Activated CD8-positive, alpha-beta T cell treated with anti-CD3 and anti-CD28 coated beads, Interleukin-2, amount 10 ng/mL, durations not matched to agents 7 days and 5 days (primary cell): ENCODE measurements at regions of chr3 and their contacts with region 1.

Region 1: DNA sequence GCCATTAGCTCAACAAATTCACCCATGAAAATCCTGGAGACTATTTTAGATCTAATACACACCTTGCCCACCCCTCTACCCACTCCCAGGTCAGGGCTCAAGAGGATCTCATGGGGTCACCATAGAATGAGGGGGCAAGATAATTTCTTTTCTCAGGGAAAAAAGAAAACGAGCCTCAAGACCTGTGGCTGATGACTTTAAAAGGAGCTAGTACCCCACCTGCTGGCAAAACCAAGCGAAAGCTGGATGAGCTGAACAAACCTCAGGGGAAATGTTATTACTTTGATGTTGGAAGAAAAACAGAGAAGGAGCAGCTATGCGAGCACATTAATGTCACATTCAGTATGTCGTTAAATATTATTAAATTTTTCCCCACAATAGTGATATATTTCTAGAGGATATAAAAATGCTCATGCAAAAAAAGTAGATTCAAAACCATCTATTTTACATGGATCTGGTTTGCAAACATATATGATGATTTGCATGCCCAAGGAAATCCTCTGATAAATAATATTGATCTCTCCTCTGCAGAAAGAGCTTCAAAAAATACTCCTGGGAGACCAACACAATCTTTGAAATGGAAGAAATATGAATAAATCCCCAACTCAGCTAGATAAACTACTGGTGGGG is 37.7 kb downstream of the PLD1 start:
- DNase-seq: peak; percentile 57
- ATAC-seq: no peak
- H3K4me3 Mint-ChIP-seq: no peak overlapping the region
- H3K27ac Mint-ChIP-seq: no peak overlapping the region
- H3K4me1 Mint-ChIP-seq: no peaks in the 10 kb centered on the region
- H3K27me3 Mint-ChIP-seq: peaks cover 20% of the 10 kb centered on the region

Region 2: GRCh38 chr3:170961616-170962400 is 810.7 kb before region 1 on chr3:
- CTCF ChIA-PET with region 1: interaction called, 61 read pairs
- POLR2A ChIA-PET with region 1: no interaction called
- DNase-seq: peak; percentile 26
- ATAC-seq: no peak
- H3K4me3 Mint-ChIP-seq: no peak overlapping the region
- H3K27ac Mint-ChIP-seq: no peak overlapping the region
- H3K4me1 Mint-ChIP-seq: no peaks in the 10 kb centered on the region
- H3K27me3 Mint-ChIP-seq: peaks cover 14% of the 10 kb centered on the region

Region 3: DNA sequence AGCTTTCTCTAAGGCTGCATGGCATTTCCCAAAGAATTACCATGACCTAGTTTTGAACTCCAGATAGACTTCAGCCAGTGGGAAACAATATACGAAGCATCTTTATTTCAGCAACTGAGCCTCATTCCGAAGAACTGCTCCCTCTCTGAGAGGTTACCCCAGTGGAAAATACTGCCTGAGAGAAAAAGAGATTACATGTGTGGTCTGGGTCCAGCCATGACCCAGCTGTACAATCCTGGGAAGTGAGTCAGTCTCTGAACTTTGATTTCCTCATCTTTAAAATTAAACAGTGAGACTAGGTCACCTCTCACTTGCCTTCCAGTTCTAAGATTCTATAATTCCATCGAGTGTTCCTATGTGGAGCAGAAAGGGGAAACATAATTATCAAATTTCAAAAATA is 354.7 kb before region 1 on chr3:
- CTCF ChIA-PET with region 1: no interaction called
- POLR2A ChIA-PET with region 1: no interaction called
- DNase-seq: no peak
- ATAC-seq: no peak
- H3K4me3 Mint-ChIP-seq: no peak overlapping the region
- H3K27ac Mint-ChIP-seq: no peak overlapping the region
- H3K4me1 Mint-ChIP-seq: no peaks in the 10 kb centered on the region
- H3K27me3 Mint-ChIP-seq: no peaks in the 10 kb centered on the region

Region 4: GRCh38 chr3:171614318-171614921 is 158.1 kb before region 1 on chr3:
- CTCF ChIA-PET with region 1: interaction called, 14 read pairs
- POLR2A ChIA-PET with region 1: no interaction called
- DNase-seq: no peak
- ATAC-seq: no peak
- H3K4me3 Mint-ChIP-seq: no peak overlapping the region
- H3K27ac Mint-ChIP-seq: no peak overlapping the region
- H3K4me1 Mint-ChIP-seq: no peaks in the 10 kb centered on the region
- H3K27me3 Mint-ChIP-seq: peaks cover 16% of the 10 kb centered on the region

Region 5: DNA sequence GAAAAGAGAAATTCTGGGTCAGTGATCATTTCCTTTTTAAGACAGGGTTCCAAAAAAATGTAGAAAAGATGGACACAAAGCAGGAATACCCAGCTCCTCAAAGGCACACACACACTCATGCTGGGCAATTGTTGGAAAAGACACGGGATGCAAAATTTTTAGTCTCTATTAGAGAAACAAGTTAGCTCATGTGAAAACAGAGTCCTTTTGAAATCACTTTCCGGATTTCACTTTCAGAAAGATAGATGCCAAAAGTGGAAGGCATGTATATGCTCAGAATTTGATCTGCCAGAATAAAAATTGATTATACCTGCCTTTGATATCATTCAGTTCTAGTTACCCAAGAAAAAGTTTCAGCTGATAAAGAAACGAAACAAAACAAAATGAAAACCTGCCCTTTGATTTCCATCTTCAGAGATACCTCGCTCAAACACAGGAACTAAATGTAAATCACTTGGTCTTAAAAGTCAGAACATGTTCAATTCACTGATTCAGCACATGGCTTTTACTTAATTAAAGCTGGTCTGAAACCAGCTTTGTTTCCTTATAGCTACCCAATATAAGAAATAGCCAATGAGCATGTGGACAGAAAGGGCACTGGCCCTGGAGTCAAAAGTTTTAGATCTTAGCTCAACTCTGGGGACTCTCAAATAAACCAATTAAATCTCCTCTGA is 15.0 kb before region 1 on chr3:
- CTCF ChIA-PET with region 1: interaction called, 20 read pairs
- POLR2A ChIA-PET with region 1: no interaction called
- DNase-seq: no peak
- ATAC-seq: no peak
- H3K4me3 Mint-ChIP-seq: no peak overlapping the region
- H3K27ac Mint-ChIP-seq: no peak overlapping the region
- H3K4me1 Mint-ChIP-seq: no peaks in the 10 kb centered on the region
- H3K27me3 Mint-ChIP-seq: peaks cover 17% of the 10 kb centered on the region

Region 6: GRCh38 chr3:171829841-171830517 is 57.4 kb after region 1 on chr3:
- CTCF ChIA-PET with region 1: interaction called, 12 read pairs
- POLR2A ChIA-PET with region 1: no interaction called
- DNase-seq: no peak
- ATAC-seq: no peak
- H3K4me3 Mint-ChIP-seq: no peak overlapping the region
- H3K27ac Mint-ChIP-seq: no peak overlapping the region
- H3K4me1 Mint-ChIP-seq: no peaks in the 10 kb centered on the region
- H3K27me3 Mint-ChIP-seq: peaks cover 27% of the 10 kb centered on the region

Region 7: DNA sequence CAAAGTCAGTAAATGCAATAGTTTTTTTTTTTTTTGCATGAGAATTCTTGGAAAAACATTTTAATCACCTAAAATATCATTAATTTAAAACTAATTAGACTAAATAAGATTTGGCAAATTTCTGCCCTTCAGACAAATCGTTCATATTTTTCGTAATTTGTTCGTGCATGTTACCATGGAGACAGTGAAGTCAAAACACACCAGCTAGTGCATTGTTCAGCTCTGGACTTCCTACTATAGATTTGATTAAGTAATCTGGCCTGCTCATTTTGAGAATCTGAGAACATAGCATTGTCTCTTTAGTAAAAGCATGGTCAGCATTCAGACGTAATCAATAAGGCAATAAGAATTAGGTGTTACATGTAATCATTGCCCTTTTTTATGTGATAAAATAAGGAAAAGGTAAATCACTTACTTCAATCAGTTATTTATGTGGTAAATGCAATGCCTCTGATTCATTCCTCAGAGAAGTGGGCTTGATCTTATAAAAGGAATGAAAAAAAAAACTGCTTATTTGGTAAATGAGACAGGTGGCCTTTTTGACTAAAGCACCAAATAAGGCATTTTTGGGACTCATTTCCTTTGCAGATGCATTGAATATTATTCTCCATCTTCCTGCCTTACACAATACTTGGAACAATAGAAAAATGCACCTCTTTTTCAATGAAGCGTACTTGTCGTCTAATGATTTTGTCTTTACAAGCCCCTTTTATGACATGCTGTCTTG is 182.3 kb after region 1 on chr3:
- CTCF ChIA-PET with region 1: no interaction called
- POLR2A ChIA-PET with region 1: no interaction called
- DNase-seq: no peak
- ATAC-seq: no peak
- H3K4me3 Mint-ChIP-seq: no peak overlapping the region
- H3K27ac Mint-ChIP-seq: no peak overlapping the region
- H3K4me1 Mint-ChIP-seq: no peaks in the 10 kb centered on the region
- H3K27me3 Mint-ChIP-seq: peaks cover 13% of the 10 kb centered on the region